ENCODE measurements at regions of chr11 and their contacts with region 1.

Region 1: DNA sequence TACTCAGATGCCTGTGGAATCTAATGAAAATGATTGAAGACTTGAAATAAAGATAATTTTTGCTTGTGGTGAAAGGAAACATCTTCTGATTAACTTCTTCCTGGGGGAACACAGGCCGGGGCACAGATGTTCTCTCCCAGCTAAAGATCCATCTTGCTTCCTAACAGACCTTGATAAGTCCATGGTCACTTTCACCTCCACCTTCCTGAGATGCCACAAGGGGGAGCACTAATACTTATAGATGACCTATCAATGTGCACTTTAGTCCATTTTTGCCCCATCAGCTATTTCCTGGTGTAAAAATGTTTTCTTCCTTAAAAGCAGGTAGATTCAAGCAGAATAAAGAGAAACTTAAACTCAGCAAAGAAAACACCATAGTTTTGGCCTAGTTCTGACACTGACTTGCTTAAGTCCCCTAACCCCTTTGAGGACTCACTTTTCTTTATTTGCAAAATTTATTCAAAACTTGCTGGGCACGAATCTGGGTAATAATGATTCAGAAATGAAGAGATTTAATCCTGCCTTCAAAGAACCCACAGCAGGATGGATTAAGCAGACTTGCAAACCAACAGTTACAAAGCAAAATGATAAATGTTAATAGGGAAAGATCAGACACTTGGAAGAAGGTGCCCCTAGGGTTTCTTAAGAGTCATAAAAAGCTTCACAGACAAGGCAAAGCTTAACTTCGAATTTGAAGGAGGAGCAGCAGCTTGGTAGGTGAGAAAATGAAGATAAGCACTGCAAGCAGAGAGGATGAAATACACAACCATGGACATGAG is 158.7 kb downstream of the RAB38 start:
- DNase-seq: peak; percentile 33 to 55
- H3K4me3 ChIP-seq: no peak overlapping the region
- H3K27ac ChIP-seq: no peak overlapping the region
- H3K4me1 ChIP-seq: no peaks in the 10 kb centered on the region
- H3K27me3 ChIP-seq: no peaks in the 10 kb centered on the region
- CTCF ChIP-seq: peak in 2 of 3 experiments; percentile 62 to 75; a peak in 3 of 4 replicates
- EP300 ChIP-seq: no peak
- POLR2A ChIP-seq: no peak
- RAD21 ChIP-seq: peak; percentile 87 to 89

Region 2: DNA sequence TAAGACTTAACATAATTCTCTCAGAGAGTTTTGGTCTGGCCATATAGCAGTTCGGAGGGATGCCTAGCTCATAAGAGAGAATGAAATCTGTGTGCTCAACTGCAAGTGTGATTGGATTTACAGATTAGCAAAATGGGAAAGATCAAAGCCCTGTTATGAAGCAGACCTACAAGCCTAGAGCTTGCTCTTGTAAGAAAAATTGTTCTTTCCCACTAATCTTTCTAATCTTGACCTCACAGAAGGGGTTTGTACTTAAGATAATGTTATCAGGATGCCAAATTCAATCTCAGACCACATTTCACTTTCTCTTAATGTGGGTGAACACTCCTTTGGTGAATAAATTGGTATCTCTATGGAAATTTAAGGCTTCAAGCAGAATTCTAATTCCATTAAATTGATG is 108.5 kb before region 1 on chr11:
- CTCF ChIA-PET with region 1: no interaction called
- POLR2A ChIA-PET with region 1: no interaction called
- DNase-seq: no peak
- H3K4me3 ChIP-seq: no peak overlapping the region
- H3K27ac ChIP-seq: no peak overlapping the region
- H3K4me1 ChIP-seq: no peaks in the 10 kb centered on the region
- H3K27me3 ChIP-seq: no peaks in the 10 kb centered on the region
- CTCF ChIP-seq: no peak
- EP300 ChIP-seq: no peak
- POLR2A ChIP-seq: no peak
- RAD21 ChIP-seq: no peak

Region 3: DNA sequence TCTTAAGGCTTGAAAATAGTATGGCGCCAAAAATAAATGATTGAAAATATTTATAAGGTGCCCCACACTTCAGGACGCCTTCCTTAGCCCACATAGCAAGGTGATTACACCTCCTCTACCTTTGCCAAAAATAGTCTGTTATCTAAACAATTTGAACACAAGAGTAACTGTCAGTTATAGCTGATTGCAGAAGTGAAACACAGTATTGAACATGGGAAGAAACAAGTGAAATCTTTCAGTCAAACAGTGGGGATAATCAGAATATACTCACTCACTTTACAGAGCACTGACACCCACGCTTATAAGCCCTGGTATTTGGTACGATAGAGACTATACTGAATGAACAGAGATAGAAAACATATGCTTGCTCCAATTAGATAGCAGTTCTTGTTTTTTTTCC is 44.4 kb before region 1 on chr11:
- CTCF ChIA-PET with region 1: interaction called, 16 read pairs
- POLR2A ChIA-PET with region 1: no interaction called
- DNase-seq: no peak
- H3K4me3 ChIP-seq: no peak overlapping the region
- H3K27ac ChIP-seq: no peak overlapping the region
- H3K4me1 ChIP-seq: peaks cover 0 to 7% (median 4%) of the 10 kb centered on the region in 4 experiments; a peak in 2 of 7 replicates
- H3K27me3 ChIP-seq: no peaks in the 10 kb centered on the region
- CTCF ChIP-seq: no peak
- EP300 ChIP-seq: no peak
- POLR2A ChIP-seq: no peak
- RAD21 ChIP-seq: no peak

Region 4: DNA sequence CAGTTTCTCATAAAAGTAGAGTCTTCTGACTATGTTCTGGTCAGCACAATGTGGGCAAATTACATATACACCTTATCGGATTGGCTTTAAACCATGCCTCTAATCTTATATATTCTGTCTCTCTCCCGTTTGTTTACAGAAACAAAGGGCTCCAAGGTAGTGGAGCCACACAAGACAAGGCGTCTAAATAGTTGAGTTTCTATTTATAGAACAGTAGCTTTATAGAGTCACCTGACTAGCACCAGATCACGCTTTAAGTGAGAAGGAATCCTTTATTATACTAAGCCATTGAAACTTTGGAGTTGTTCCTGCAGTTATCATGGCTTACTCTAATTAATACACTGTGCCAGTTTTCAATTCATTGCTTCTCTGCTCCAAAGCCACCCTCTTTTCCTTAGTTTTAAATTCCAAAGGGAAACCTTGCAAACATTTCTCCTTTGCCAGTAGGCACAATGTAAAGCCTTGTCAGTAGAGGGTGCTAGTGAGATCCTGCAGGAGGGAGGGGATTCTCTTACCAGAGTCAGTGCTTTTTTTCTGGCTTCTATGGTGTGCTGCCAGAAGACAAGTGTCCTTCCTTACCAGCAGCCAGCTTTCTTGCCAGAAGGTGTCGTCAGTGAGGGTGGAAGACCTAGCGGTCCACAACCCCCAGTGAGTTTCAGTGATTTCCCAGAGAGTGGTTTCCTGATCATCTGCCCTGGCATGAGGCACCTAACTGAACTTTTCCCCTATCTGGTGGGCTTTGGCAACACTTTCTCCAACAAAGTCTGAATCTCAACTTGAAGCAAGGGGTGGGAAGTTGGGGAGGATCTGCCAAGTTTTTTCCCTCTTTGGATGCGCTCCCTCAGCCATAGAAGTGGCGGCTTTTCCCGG is 87.0 kb after region 1 on chr11:
- CTCF ChIA-PET with region 1: interaction called, 10 read pairs
- POLR2A ChIA-PET with region 1: no interaction called
- DNase-seq: peak; percentile 63 to 65
- H3K4me3 ChIP-seq: no peak overlapping the region
- H3K27ac ChIP-seq: no peak overlapping the region
- H3K4me1 ChIP-seq: peaks cover 0 to 5% (median 0%) of the 10 kb centered on the region in 4 experiments; a peak in 2 of 7 replicates
- H3K27me3 ChIP-seq: no peaks in the 10 kb centered on the region
- CTCF ChIP-seq: peak; percentile 71 to 99 (median 95)
- EP300 ChIP-seq: no peak
- POLR2A ChIP-seq: no peak
- RAD21 ChIP-seq: peak; percentile 82 to 83

Region 5: GRCh38 chr11:88538088-88538487 is 521.5 kb after region 1 on chr11:
- CTCF ChIA-PET with region 1: interaction called, 32 read pairs
- POLR2A ChIA-PET with region 1: no interaction called
- DNase-seq: no peak
- H3K4me3 ChIP-seq: no peak overlapping the region
- H3K27ac ChIP-seq: no peak overlapping the region
- H3K4me1 ChIP-seq: no peaks in the 10 kb centered on the region
- H3K27me3 ChIP-seq: no peaks in the 10 kb centered on the region
- CTCF ChIP-seq: no peak
- EP300 ChIP-seq: no peak
- POLR2A ChIP-seq: no peak
- RAD21 ChIP-seq: no peak

Region 6: DNA sequence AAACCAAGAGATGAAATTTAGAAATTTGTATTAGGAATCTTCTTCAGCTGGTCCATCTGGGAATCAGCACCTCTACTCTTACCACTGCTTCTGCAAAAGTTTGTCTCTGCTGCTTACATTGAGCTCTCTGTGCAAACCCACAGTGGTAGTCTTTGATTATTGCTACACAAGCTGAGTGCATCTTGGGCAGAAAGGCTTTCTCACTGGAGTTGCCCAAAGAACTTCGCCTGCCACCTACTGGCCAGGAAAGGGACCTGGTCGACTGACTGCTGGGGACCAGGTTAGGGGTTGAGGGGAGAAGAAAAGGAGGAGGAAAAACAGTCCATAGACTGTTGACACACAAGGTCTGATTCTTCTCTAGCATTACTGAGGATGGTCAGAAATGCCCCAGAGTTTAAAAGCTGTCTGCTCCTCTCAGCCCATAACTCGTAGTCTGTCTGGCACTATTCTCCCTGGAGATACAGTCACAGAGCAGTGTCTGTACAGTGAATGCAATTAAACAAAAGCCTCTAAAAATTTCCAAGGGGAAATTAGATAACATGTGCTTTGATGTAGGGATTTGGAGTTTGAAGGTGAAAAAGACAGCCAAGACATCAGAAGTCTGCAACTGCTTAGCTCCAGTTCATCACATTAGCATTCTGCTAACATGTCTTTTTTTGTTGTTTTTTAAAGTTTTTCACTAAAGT is 535.9 kb after region 1 on chr11:
- CTCF ChIA-PET with region 1: interaction called, 28 read pairs
- POLR2A ChIA-PET with region 1: no interaction called
- DNase-seq: peak; percentile 21 to 72
- H3K4me3 ChIP-seq: no peak overlapping the region
- H3K27ac ChIP-seq: no peak overlapping the region
- H3K4me1 ChIP-seq: peaks cover 0 to 2% (median 0%) of the 10 kb centered on the region in 4 experiments; a peak in 1 of 7 replicates
- H3K27me3 ChIP-seq: no peaks in the 10 kb centered on the region
- CTCF ChIP-seq: peak; percentile 74 to 93 (median 85)
- EP300 ChIP-seq: no peak
- POLR2A ChIP-seq: no peak
- RAD21 ChIP-seq: peak; percentile 84 to 89

Measured in H1 (cell line).